OCI-LY7 (cell line): ENCODE measurements at regions of chr11 and their contacts with region 1.

Region 1: GRCh38 chr11:59135648-59136461 is 6.8 kb upstream of the FAM111A start:
- DNase-seq: peak; percentile 84
- H3K4me3 ChIP-seq: no peak overlapping the region
- H3K27ac ChIP-seq: no peak overlapping the region
- H3K4me1 ChIP-seq: no peaks in the 10 kb centered on the region
- CTCF ChIP-seq: peak; percentile 97

Region 2: DNA sequence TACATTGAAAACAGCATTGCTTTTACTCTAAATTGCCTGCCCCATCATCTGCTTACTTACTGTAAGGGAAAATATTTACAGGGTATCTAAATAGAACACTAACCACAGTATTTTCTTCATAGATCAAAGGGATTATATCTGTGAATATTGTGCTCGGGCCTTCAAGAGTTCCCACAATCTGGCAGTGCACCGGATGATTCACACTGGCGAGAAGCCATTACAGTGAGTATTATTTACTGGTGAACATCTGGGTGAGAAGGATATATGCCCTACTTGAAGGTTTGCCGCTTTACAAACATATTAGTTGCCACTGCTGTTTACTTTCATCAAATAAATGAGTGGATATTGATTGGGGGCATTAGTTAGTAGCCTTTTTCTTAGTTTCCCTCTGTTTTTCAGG is 519.3 kb before region 1 on chr11:
- CTCF ChIA-PET with region 1: no interaction called
- POLR2A ChIA-PET with region 1: no interaction called
- intact Hi-C with region 1: no loop called
- DNase-seq: no peak
- H3K4me3 ChIP-seq: no peak overlapping the region
- H3K27ac ChIP-seq: no peak overlapping the region
- H3K4me1 ChIP-seq: peaks cover 4% of the 10 kb centered on the region
- CTCF ChIP-seq: no peak

Region 3: GRCh38 chr11:58788355-58789023 is 347.4 kb before region 1 on chr11:
- CTCF ChIA-PET with region 1: no interaction called
- POLR2A ChIA-PET with region 1: no interaction called
- intact Hi-C with region 1: loop called (anchors 5 kb)
- DNase-seq: peak; percentile 66
- H3K4me3 ChIP-seq: no peak overlapping the region
- H3K27ac ChIP-seq: no peak overlapping the region
- H3K4me1 ChIP-seq: no peaks in the 10 kb centered on the region
- CTCF ChIP-seq: peak; percentile 92

Region 4: GRCh38 chr11:58923300-58923788 is 212.5 kb before region 1 on chr11:
- CTCF ChIA-PET with region 1: no interaction called
- POLR2A ChIA-PET with region 1: no interaction called
- intact Hi-C with region 1: loop called (anchors 10 kb)
- DNase-seq: peak; percentile 67
- H3K4me3 ChIP-seq: no peak overlapping the region
- H3K27ac ChIP-seq: no peak overlapping the region
- H3K4me1 ChIP-seq: no peaks in the 10 kb centered on the region
- CTCF ChIP-seq: peak; percentile 77

Region 5: GRCh38 chr11:59053387-59053786 is 82.5 kb before region 1 on chr11:
- CTCF ChIA-PET with region 1: interaction called, 4 read pairs
- POLR2A ChIA-PET with region 1: no interaction called
- intact Hi-C with region 1: loop called (anchors 1 kb)
- DNase-seq: peak; percentile 76
- H3K4me3 ChIP-seq: no peak overlapping the region
- H3K27ac ChIP-seq: no peak overlapping the region
- H3K4me1 ChIP-seq: peaks cover 49% of the 10 kb centered on the region
- CTCF ChIP-seq: peak; percentile 89

Region 6: DNA sequence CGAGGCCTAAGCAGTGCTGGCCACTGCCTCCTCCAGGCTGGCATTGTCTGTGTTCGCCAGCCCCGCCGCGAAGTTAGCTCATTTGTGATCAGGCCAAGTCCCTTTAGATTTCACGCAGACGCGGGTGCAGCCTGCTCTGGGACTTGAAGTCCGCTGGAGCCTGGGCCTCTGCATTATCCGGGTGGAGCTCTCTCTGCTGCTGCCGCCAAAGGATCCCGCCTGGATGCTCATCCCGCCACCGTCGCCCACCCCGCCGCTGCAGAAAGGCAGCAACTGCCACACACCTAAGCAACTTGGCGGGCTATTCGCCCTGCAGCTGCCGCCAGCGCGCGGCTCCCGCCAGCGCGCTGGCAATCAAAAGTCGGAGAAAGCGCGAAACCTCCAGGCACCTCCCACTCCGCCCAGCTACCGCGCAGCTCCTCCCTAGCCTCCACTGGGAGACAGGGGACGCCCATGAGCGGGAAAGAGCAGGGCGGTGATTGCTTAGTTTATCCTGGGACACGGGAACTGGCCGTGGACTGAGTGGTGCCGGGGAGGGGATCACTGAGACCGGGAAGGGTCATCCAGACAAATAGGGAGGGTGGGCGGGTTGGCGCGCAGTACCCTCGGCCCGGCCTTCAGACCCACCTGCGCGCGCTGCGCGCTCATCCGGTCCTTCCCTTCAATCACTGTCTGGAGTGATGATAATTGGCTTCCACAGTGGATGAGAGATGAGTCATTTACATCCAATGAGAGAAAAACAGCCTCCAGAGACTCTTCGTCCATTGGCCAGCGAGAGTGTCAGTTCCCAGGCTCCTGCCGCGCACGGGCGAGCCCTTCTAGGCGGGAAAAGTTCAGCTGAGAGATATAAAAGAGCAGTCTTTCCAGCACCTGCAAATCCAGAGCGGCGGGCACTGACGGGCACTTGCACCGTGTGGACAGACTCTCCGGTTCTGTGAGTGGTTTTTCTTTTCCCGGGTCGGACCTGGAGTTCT is 29.2 kb before region 1 on chr11 and contains the start of gene FAM111B:
- CTCF ChIA-PET with region 1: interaction called, 4 read pairs
- POLR2A ChIA-PET with region 1: interaction called, 4 read pairs
- intact Hi-C with region 1: loop called (anchors 2 kb)
- DNase-seq: peak; percentile 91
- H3K4me3 ChIP-seq: peak within 1 kb of the TSS; percentile 88
- H3K27ac ChIP-seq: peak within 1 kb of the TSS; percentile 70
- H3K4me1 ChIP-seq: peaks cover 77% of the 10 kb centered on the region
- CTCF ChIP-seq: peak; percentile 35
- total RNA-seq, gene FAM111B: 30.3 and 37.6 TPM in 2 replicates